Prostate gland (tissue), 2 donors: ENCODE measurements at regions of chr15 and their contacts with region 1.

Region 1: GRCh38 chr15:38683382-38684242 is 119.0 kb upstream of the RASGRP1 start:
- DNase-seq: peak; percentile 36
- H3K4me3 ChIP-seq: no peak overlapping the region
- H3K27ac ChIP-seq: no peak overlapping the region
- H3K4me1 ChIP-seq: no peaks in the 10 kb centered on the region
- H3K27me3 ChIP-seq: no peaks in the 10 kb centered on the region
- CTCF ChIP-seq: peak; percentile 21 to 82 (median 69)
- POLR2A ChIP-seq: no peak

Region 2: GRCh38 chr15:38440353-38441129 is 243.1 kb before region 1 on chr15:
- intact Hi-C with region 1: loop called (anchors 5 kb)
- DNase-seq: peak; percentile 71
- H3K4me3 ChIP-seq: no peak overlapping the region
- H3K27ac ChIP-seq: no peak overlapping the region
- H3K4me1 ChIP-seq: no peaks in the 10 kb centered on the region
- H3K27me3 ChIP-seq: no peaks in the 10 kb centered on the region
- CTCF ChIP-seq: peak; percentile 82 to 97 (median 90)
- POLR2A ChIP-seq: no peak

Region 3: DNA sequence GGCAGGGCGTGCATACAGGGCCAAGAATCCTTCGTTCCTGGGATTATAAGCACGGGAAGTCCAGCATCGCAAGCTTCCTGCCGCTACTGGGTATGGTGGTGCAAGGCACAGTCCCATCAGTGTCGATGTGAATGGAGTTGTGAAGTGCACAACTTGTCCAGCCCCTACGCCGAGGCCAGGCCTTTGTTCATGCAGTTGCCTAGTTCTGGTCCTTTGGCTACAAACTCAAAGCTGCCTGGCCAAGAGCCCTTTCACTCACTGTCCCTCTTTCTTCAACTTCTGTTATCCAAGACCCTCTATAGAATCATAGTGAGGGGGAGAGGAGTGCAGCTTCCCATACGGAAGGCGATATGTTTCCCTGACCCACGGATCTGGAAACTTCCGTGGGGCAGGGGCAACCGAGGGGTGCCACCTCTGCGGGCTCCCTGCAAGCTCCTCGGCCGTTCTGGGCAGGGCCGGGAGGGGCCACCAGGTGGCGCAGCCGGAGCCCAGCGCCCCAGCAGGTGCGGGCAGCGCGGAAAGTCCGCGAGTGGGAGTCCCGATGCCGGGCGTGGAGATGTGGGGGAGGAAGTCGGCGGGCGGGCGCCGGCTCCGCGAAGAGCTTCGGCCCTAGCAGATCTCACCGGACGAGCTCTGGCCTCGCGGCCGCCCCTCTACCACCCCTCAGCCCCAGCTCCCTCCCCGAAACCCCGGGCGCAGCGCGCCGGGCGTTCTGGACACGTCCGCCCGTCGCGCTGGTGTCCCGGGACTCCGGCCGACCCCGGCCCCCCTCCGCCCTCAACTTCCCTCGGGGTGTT is 119.7 kb before region 1 on chr15:
- intact Hi-C with region 1: loop called (anchors 10 kb)
- DNase-seq: peak; percentile 56
- H3K4me3 ChIP-seq: peak overlapping the region; percentile 51
- H3K27ac ChIP-seq: peak overlapping the region in 1 of 2 donors; percentile 45
- H3K4me1 ChIP-seq: peaks cover 5% of the 10 kb centered on the region
- H3K27me3 ChIP-seq: peaks cover 4% of the 10 kb centered on the region
- CTCF ChIP-seq: peak; percentile 76 to 85 (median 82)
- POLR2A ChIP-seq: no peak